Pancreas (tissue), 10 donors: ENCODE measurements at regions of chr10 and their contacts with region 1.

Region 1: DNA sequence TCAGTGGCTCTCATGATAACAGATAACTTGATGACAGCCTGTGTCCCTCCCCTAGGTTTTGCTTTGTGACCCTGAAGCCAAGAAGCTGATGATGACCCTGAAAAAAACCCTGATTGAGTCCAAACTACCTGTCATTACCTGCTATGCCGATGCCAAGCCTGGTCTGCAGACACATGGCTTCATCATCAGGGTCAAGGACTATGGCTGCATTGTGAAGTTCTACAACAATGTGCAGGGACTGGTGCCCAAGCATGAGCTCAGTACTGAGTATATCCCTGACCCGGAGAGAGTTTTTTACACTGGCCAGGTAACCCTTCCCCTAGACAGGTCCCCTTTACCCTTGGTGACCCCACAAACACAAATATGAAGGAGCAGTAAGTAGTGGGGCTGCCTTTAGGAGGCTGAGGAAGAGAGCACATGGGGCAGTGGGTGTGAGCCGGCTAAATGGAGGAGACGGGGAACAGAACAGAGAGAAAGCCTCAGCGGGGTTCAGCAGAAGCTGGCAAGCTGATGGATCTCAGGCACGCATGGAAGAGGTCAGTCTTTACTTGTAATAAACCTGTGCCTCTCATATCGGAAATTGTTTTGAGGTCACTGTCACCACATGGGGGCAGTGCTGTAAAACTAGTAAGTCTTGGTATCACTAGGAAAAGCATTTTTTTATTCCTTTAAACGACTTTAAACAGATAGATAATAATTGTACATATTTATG is 20.2 kb downstream of the PDCD11 start:
- DNase-seq: peak in 4 of 6 donors; percentile 37 to 62 (median 52)
- ATAC-seq: peak in 3 of 4 donors; percentile 81 to 87 (median 81)
- H3K4me3 ChIP-seq: no peak overlapping the region
- H3K27ac ChIP-seq: no peak overlapping the region
- H3K4me1 ChIP-seq: no peaks in the 10 kb centered on the region
- H3K27me3 ChIP-seq: no peaks in the 10 kb centered on the region
- CTCF ChIP-seq: peak; percentile 22 to 49 (median 32)

Region 2: GRCh38 chr10:103327906-103328305 is 88.7 kb before region 1 on chr10:
- intact Hi-C with region 1: no loop called
- DNase-seq: no peak
- ATAC-seq: no peak
- H3K4me3 ChIP-seq: no peak overlapping the region
- H3K27ac ChIP-seq: no peak overlapping the region
- H3K4me1 ChIP-seq: no peaks in the 10 kb centered on the region
- H3K27me3 ChIP-seq: no peaks in the 10 kb centered on the region
- CTCF ChIP-seq: no peak

Region 3: GRCh38 chr10:103476046-103476995 is 59.7 kb after region 1 on chr10:
- intact Hi-C with region 1: loop called in 2 of 3 experiments (anchors 5 kb)
- DNase-seq: no peak
- ATAC-seq: no peak
- H3K4me3 ChIP-seq: no peak overlapping the region
- H3K27ac ChIP-seq: no peak overlapping the region
- H3K4me1 ChIP-seq: peaks cover 0 to 3% (median 0%) of the 10 kb centered on the region in 3 donors
- H3K27me3 ChIP-seq: no peaks in the 10 kb centered on the region
- CTCF ChIP-seq: no peak

Region 4: GRCh38 chr10:103481974-103482531 is 65.5 kb after region 1 on chr10:
- intact Hi-C with region 1: loop called in 2 of 3 experiments (anchors 5 kb)
- DNase-seq: no peak
- ATAC-seq: peak; percentile 48 to 73 (median 68)
- H3K4me3 ChIP-seq: no peak overlapping the region
- H3K27ac ChIP-seq: no peak overlapping the region
- H3K4me1 ChIP-seq: peaks cover 0 to 3% (median 0%) of the 10 kb centered on the region in 3 donors
- H3K27me3 ChIP-seq: no peaks in the 10 kb centered on the region
- CTCF ChIP-seq: peak in 3 of 4 donors; percentile 24 to 45 (median 36)

Region 5: DNA sequence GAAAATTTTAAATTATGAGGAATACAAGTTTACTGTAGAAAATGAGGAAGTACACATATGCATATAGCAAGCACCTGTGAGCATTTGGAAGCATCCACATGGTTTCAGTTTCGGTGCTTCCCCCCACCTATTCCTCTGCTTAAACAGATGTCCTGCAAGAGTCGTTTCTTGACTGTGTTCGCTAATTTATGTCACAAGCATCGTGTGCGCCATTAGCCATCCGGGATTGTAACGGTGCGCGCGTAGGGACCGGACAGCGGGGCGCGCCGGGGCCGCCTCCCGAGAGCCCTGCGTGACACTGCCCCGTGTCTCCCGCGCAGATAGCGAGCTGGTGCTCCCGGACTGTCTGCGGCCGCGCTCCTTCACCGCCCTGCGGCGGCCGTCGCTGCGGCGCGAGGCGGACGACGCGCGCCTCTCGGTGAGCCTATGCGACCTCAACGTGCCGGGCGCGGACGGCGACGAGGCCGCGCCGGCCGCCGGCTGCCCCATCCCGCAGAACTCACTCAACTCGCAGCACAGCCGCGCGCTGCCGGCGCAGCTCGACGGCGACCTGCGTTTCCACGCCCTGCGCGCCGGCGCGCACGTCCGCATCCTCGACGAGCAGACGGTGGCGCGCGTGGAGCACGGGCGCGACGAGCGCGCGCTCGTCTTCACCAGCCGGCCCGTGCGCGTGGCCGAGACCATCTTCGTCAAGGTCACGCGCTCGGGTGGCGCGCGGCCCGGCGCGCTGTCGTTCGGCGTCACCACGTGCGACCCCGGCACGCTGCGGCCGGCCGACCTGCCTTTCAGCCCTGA is 167.8 kb after region 1 on chr10:
- intact Hi-C with region 1: loop called in 1 of 3 experiments (anchors 10 kb)
- DNase-seq: no peak
- ATAC-seq: no peak
- H3K4me3 ChIP-seq: peak overlapping the region in 1 of 4 donors; percentile 34
- H3K27ac ChIP-seq: no peak overlapping the region
- H3K4me1 ChIP-seq: peaks cover 0 to 3% (median 3%) of the 10 kb centered on the region in 3 donors
- H3K27me3 ChIP-seq: no peaks in the 10 kb centered on the region
- CTCF ChIP-seq: no peak

Region 6: GRCh38 chr10:103598654-103599115 is 182.1 kb after region 1 on chr10:
- intact Hi-C with region 1: loop called in 1 of 3 experiments (anchors 5 kb)
- DNase-seq: peak in 2 of 6 donors; percentile 45 to 65
- ATAC-seq: peak; percentile 66 to 85 (median 76)
- H3K4me3 ChIP-seq: no peak overlapping the region
- H3K27ac ChIP-seq: no peak overlapping the region
- H3K4me1 ChIP-seq: no peaks in the 10 kb centered on the region
- H3K27me3 ChIP-seq: no peaks in the 10 kb centered on the region
- CTCF ChIP-seq: peak in 3 of 4 donors; percentile 9 to 39 (median 36)

Region 7: DNA sequence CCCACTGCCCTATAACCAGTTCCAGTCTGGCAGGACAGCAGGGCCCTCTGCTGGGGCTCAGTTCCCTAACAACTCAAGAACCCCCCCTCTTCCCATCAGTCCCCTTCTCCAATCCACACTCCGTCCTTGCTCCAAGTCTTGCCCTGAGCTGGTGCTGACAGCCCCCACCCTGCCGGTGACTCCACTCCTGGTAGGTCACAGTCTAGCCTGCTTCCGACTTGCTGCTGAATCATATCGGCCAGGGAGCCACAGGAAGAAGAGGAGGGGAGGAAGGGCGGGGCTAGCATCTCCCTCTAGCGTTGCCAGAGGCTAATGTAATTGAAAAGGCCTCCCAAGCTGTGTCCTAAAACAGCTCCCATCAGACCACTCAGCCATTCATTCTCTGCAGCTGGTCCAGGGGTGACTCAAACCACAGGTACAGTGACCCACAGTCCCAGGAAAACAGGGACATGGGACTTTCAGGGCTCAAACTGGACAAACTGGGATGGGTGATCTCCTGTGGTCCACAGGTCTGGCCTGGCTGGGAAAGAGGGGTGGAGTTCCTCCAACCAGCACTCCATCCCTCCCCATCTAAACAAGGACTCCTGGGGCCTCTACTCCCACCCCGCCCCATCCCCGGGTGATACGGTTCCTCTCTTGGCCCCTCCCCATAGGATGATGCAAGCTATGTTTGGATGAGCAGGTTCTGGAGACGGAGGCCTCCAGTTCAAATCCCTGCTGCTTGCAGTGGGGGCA is 280.0 kb after region 1 on chr10:
- intact Hi-C with region 1: loop called in 1 of 3 experiments (anchors 10 kb)
- DNase-seq: peak in 1 of 6 donors; percentile 33
- ATAC-seq: peak in 3 of 4 donors; percentile 59 to 64 (median 60)
- H3K4me3 ChIP-seq: no peak overlapping the region
- H3K27ac ChIP-seq: no peak overlapping the region
- H3K4me1 ChIP-seq: no peaks in the 10 kb centered on the region
- H3K27me3 ChIP-seq: no peaks in the 10 kb centered on the region
- CTCF ChIP-seq: no peak